ENCODE measurements at regions of chr6 and their contacts with region 1.

Region 1: GRCh38 chr6:125153391-125154117 is at the start of gene TPD52L1:
- DNase-seq: peak; percentile 76
- H3K4me3 Mint-ChIP-seq: peak within 1 kb of the TSS; percentile 69
- H3K27ac Mint-ChIP-seq: no peak within 1 kb of the TSS
- H3K4me1 Mint-ChIP-seq: peaks cover 6% of the 10 kb centered on the region
- H3K27me3 Mint-ChIP-seq: peaks cover 18% of the 10 kb centered on the region
- total RNA-seq, gene TPD52L1: 1.3 to 1.4 TPM

Region 2: DNA sequence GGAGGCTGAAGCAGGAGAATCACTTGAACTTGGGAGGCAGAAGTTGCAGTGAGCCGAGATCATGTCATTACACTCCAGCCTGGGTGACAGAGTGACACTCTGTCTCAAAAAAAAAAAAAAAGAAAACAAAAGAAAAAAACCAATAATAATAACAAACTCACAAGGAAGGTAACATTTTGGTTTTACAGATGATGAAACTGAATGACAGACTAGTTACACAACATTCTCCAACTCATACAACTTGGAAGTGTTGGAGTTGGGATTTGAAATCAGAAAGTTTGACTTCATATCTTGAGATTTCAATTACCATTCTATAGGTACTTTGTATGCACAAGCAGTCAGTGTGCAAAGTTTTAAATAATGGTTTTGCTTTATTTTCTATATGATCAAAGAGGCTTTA is 10.3 kb after region 1 on chr6:
- CTCF ChIA-PET with region 1: interaction called, 12 read pairs
- POLR2A ChIA-PET with region 1: no interaction called
- intact Hi-C with region 1: no loop called
- DNase-seq: no peak
- H3K4me3 Mint-ChIP-seq: no peak overlapping the region
- H3K27ac Mint-ChIP-seq: no peak overlapping the region
- H3K4me1 Mint-ChIP-seq: no peaks in the 10 kb centered on the region
- H3K27me3 Mint-ChIP-seq: peaks cover 1% of the 10 kb centered on the region

Region 3: GRCh38 chr6:125220712-125221111 is 67.2 kb after region 1 on chr6:
- CTCF ChIA-PET with region 1: no interaction called
- POLR2A ChIA-PET with region 1: no interaction called
- intact Hi-C with region 1: no loop called
- DNase-seq: no peak
- H3K4me3 Mint-ChIP-seq: no peak overlapping the region
- H3K27ac Mint-ChIP-seq: no peak overlapping the region
- H3K4me1 Mint-ChIP-seq: no peaks in the 10 kb centered on the region
- H3K27me3 Mint-ChIP-seq: no peaks in the 10 kb centered on the region

Region 4: GRCh38 chr6:125301435-125302391 is 148.2 kb after region 1 on chr6 and contains the start of gene HDDC2:
- CTCF ChIA-PET with region 1: interaction called, 6 read pairs
- POLR2A ChIA-PET with region 1: no interaction called
- intact Hi-C with region 1: loop called (anchors 5 kb)
- DNase-seq: peak; percentile 57
- H3K4me3 Mint-ChIP-seq: peak within 1 kb of the TSS; percentile 91
- H3K27ac Mint-ChIP-seq: peak within 1 kb of the TSS; percentile 95
- H3K4me1 Mint-ChIP-seq: peaks cover 54% of the 10 kb centered on the region
- H3K27me3 Mint-ChIP-seq: no peaks in the 10 kb centered on the region
- total RNA-seq, gene HDDC2: 88.9 to 92.3 TPM

Region 5: DNA sequence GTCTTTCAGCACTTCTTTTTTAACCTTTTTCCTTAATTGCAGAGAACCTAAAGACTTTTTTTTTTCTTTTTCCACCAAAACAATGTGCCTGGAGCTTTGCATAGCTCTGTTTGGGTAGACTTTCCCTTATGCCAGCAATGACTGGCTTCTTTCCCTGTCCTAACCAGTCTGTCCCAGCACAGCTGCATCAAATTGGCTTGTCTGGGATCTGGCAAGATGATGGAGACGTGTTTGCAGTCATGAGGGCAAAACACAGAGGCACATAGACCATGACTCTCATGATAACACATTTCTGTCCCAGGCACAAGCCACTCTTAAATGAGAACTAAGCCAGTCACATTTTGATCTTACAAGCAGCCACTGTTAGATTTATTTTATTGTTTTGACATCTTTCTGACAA is 612.4 kb after region 1 on chr6:
- CTCF ChIA-PET with region 1: interaction called, 4 read pairs
- POLR2A ChIA-PET with region 1: no interaction called
- intact Hi-C with region 1: loop called (anchors 5 kb)
- DNase-seq: no peak
- H3K4me3 Mint-ChIP-seq: no peak overlapping the region
- H3K27ac Mint-ChIP-seq: no peak overlapping the region
- H3K4me1 Mint-ChIP-seq: peaks cover 3% of the 10 kb centered on the region
- H3K27me3 Mint-ChIP-seq: peaks cover 35% of the 10 kb centered on the region